ENCODE measurements at regions of chr1 and their contacts with region 1.

Region 1: DNA sequence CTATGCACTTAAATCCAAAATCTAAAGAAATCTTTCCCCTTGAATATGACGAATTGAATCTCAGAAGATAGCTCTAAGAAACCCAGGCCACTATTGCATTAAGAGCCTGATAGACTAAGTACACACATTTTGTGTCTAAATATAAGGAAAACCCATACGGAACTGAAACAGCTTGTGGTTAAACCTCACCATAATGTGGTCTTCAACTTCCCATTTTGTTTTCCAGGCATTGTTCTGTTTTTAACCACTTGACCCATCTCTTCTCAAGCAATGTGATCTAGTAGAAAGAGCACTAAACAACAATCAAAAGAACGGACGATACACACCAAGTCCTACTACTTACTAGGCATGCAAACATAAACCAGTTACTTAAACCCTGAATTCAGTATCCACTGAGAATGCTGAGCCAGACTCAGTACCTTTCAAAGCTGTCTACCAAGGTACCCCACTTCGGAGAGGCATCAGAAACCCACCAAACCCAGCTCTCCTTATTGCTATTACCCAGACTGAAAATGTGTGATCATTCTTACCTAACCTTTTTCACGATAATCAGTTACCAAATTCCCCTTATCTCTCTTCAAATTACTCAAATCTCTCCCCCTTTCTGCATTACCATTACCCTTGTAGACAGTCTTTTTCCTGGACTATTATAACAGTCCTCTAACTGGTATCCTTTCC is 12.8 kb downstream of the OTUD7B start:
- DNase-seq: peak; percentile 38
- CTCF ChIP-seq: no peak

Region 2: GRCh38 chr1:150010393-150011115 is 12.8 kb after region 1 on chr1 and contains the start of gene OTUD7B:
- CTCF ChIA-PET with region 1: interaction called, 42 read pairs
- POLR2A ChIA-PET with region 1: interaction called, 3 read pairs
- DNase-seq: peak; percentile 89
- CTCF ChIP-seq: no peak

Region 3: DNA sequence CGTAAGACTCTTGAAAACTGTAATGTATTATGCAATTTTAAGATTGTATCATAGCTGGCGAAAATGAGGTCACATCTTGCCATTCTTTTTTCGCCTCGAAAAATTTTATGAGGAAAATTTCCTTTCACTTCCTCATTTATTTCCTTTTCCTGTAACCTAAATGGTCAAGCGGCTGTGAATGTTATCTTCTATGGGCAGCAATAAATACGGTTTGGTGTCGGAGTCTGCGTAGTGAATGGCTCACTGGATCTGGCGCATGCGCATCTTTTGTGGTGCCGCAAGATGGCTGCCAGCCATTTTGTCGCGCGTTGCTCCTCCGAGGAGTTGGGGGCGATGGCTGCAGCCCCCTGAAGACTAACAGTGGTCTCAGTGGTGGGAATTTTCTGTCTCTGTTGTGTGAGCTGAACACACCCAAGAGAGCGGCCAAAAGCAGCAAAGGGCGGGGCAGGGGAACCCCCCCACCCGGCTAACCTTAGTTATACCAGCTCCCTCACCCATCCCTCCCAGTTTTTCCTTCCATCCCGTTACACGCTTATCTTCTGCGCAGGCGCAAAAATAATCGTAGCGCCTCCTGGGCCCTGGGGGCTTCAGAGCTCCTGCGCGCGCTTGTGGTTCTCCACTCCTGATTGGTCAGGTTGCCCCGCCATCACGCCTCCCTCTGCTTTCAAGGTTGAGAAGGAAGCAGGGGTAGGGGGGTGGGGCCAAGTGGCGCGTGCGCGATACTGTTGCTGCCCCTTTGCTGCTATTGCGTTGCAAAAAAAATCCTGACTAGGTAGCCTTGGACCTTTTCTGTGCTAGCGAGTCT is 365.9 kb after region 1 on chr1 and contains the start of gene RPRD2:
- CTCF ChIA-PET with region 1: no interaction called
- POLR2A ChIA-PET with region 1: no interaction called
- DNase-seq: peak; percentile 98
- CTCF ChIP-seq: no peak